ENCODE measurements at regions of chr6 and their contacts with region 1.

Region 1: GRCh38 chr6:132813173-132813856 is 1.1 kb upstream of the RPS12 start:
- DNase-seq: peak; percentile 51
- H3K4me3 Mint-ChIP-seq: peak overlapping the region; percentile 94
- H3K27ac Mint-ChIP-seq: peak overlapping the region; percentile 97
- H3K4me1 Mint-ChIP-seq: peaks cover 27% of the 10 kb centered on the region
- H3K27me3 Mint-ChIP-seq: no peaks in the 10 kb centered on the region

Region 2: DNA sequence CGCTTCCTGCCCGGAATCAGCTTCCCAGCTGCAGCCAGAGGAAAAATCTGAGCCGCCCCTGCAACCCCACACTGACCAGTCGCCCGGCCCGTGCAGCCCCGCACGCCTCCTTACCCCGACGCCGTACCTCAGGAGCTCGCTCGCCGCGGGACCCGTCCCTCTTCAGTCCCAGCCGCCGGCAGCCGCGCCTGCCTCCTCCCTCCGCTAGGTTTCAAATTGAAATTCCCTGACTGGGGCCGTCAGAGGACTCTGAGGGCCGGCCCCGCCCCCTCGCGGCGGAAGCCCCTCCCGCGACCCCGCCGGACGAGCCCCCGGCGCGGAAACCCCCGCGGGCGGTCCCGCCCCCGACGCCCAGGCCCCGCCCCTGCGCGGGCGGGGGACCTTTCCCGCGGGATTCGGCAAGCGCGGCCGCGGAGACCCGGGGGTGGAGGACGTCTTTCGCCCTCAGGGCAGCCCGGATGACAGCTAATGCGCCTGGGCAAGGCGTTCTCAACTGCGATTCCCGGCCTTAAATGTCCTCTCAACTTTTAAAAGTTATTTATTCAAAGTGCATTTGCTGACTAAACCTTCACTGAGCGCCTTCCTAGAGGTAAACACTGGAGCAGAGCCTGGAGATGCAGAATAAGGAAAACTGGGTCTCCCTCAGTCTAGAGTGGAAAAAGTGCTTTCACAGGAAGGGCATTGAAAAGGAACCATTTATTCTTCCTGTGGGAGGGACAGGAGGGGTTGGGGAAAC is 1750.1 kb before region 1 on chr6 and contains the start of gene EPB41L2:
- CTCF ChIA-PET with region 1: no interaction called
- intact Hi-C with region 1: loop called (anchors 5 kb)
- DNase-seq: peak; percentile 80
- H3K4me3 Mint-ChIP-seq: peak within 1 kb of the TSS; percentile 80
- H3K27ac Mint-ChIP-seq: no peak within 1 kb of the TSS
- H3K4me1 Mint-ChIP-seq: peaks cover 22% of the 10 kb centered on the region
- H3K27me3 Mint-ChIP-seq: peaks cover 2% of the 10 kb centered on the region
- total RNA-seq, gene EPB41L2: 33.5 to 37.7 TPM

Region 3: GRCh38 chr6:132669690-132670291 is 143.5 kb before region 1 on chr6:
- CTCF ChIA-PET with region 1: interaction called, 8 read pairs
- intact Hi-C with region 1: loop called (anchors 1 kb)
- DNase-seq: no peak
- H3K4me3 Mint-ChIP-seq: no peak overlapping the region
- H3K27ac Mint-ChIP-seq: no peak overlapping the region
- H3K4me1 Mint-ChIP-seq: peaks cover 3% of the 10 kb centered on the region
- H3K27me3 Mint-ChIP-seq: no peaks in the 10 kb centered on the region

Region 4: GRCh38 chr6:132798869-132799538 is 14.3 kb before region 1 on chr6:
- CTCF ChIA-PET with region 1: interaction called, 18 read pairs
- intact Hi-C with region 1: loop called (anchors 1 kb)
- DNase-seq: peak; percentile 85
- H3K4me3 Mint-ChIP-seq: no peak overlapping the region
- H3K27ac Mint-ChIP-seq: no peak overlapping the region
- H3K4me1 Mint-ChIP-seq: peaks cover 18% of the 10 kb centered on the region
- H3K27me3 Mint-ChIP-seq: no peaks in the 10 kb centered on the region

Region 5: GRCh38 chr6:134373282-134373922 is 1560.1 kb after region 1 on chr6:
- CTCF ChIA-PET with region 1: no interaction called
- intact Hi-C with region 1: loop called (anchors 10 kb)
- DNase-seq: peak; percentile 61
- H3K4me3 Mint-ChIP-seq: no peak overlapping the region
- H3K27ac Mint-ChIP-seq: peak overlapping the region; percentile 4
- H3K4me1 Mint-ChIP-seq: peaks cover 38% of the 10 kb centered on the region
- H3K27me3 Mint-ChIP-seq: no peaks in the 10 kb centered on the region